Right lobe of liver (tissue), 6 donors: ENCODE measurements at regions of chr4 and their contacts with region 1.

Region 1: GRCh38 chr4:39977489-39978377 is at the start of gene PDS5A:
- DNase-seq: peak; percentile 93 to 95 (median 95)
- ATAC-seq: peak; percentile 88 to 94 (median 90)
- H3K4me3 ChIP-seq: peak within 1 kb of the TSS; percentile 90 to 99 (median 90)
- H3K27ac ChIP-seq: peak within 1 kb of the TSS; percentile 83 to 92 (median 87)
- H3K4me1 ChIP-seq: peaks cover 0 to 33% (median 13%) of the 10 kb centered on the region in 4 donors
- H3K27me3 ChIP-seq: no peaks in the 10 kb centered on the region
- CTCF ChIP-seq: peak; percentile 84 to 95 (median 85)
- POLR2A ChIP-seq: peak; percentile 83
- total RNA-seq, gene PDS5A: 28.0 to 45.7 (median 33.2) TPM

Region 2: GRCh38 chr4:39706334-39706733 is 271.4 kb before region 1 on chr4:
- intact Hi-C with region 1: loop called (anchors 10 kb)
- DNase-seq: peak; percentile 63 to 76 (median 64)
- ATAC-seq: peak; percentile 86 to 97 (median 90)
- H3K4me3 ChIP-seq: no peak overlapping the region
- H3K27ac ChIP-seq: no peak overlapping the region
- H3K4me1 ChIP-seq: peaks cover 0 to 23% (median 4%) of the 10 kb centered on the region in 4 donors
- H3K27me3 ChIP-seq: no peaks in the 10 kb centered on the region
- CTCF ChIP-seq: no peak
- POLR2A ChIP-seq: no peak

Region 3: DNA sequence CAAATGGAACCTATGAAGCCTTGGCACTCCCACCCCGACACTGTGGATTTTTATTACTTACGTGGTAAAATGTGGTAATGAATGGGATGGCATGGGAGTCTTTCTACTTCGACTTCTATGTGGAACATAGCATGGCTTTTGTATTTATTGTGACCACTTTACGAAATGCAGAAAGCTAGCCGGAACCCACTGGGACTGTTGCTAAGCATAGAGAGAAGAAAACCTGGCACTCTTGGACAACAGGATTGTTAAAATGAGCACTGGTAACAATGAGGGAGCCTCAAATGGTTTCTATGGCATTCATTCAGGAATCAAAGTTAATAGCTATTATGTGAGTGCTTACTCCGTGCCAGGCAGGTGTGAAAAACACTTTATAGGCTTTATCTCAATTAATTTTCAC is 113.3 kb before region 1 on chr4:
- intact Hi-C with region 1: no loop called
- DNase-seq: no peak
- ATAC-seq: no peak
- H3K4me3 ChIP-seq: no peak overlapping the region
- H3K27ac ChIP-seq: no peak overlapping the region
- H3K4me1 ChIP-seq: no peaks in the 10 kb centered on the region
- H3K27me3 ChIP-seq: no peaks in the 10 kb centered on the region
- CTCF ChIP-seq: no peak
- POLR2A ChIP-seq: no peak

Region 4: DNA sequence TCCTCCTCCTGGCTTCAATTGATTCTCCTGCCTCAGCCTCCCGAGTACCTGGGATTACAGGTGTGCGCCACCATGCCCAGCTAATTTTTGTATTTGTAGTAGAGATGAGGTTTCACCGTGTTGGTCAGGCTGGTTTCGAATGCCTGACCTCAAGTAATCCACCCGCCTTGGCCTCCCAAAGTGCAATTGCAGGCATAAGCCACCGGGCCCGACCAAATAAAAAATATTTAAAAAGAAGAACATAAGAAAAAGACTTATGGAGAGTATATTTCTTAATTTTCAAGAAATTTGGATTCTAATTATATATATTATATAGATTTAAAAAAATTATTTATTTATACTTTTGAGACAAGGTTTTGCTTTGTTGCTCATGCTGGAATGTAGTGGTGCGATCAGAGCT is 108.7 kb after region 1 on chr4:
- intact Hi-C with region 1: no loop called
- DNase-seq: no peak
- ATAC-seq: no peak
- H3K4me3 ChIP-seq: no peak overlapping the region
- H3K27ac ChIP-seq: no peak overlapping the region
- H3K4me1 ChIP-seq: no peaks in the 10 kb centered on the region
- H3K27me3 ChIP-seq: no peaks in the 10 kb centered on the region
- CTCF ChIP-seq: no peak
- POLR2A ChIP-seq: no peak

Region 5: DNA sequence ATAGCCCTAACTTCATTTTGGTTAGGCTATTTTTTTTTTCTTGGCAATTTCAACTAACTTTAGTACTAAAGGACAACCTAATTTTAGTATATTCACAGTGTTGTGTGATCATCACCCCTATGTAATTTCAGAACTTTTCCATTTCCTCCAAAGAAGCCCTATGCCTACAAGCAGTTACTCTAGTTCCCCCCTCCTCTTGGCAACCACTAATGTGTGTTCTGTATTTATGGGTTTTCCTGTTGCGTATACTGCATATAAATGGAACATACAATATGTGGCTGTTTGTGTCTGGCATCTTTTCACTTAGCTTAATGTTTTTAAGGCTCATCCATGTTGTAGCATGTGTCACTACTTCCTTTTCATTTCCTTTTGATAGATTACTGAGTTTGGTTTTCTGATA is 136.5 kb after region 1 on chr4:
- intact Hi-C with region 1: no loop called
- DNase-seq: no peak
- ATAC-seq: no peak
- H3K4me3 ChIP-seq: no peak overlapping the region
- H3K27ac ChIP-seq: no peak overlapping the region
- H3K4me1 ChIP-seq: no peaks in the 10 kb centered on the region
- H3K27me3 ChIP-seq: no peaks in the 10 kb centered on the region
- CTCF ChIP-seq: no peak
- POLR2A ChIP-seq: no peak